Heart left ventricle (tissue), 16 donors: ENCODE measurements at regions of chr1 and their contacts with region 1.

Region 1: GRCh38 chr1:111507411-111508201 is 4.2 kb upstream of the ADORA3 start:
- DNase-seq: peak; percentile 71 to 89 (median 85)
- ATAC-seq: peak; percentile 72 to 78 (median 76)
- H3K4me3 ChIP-seq: peak overlapping the region in 10 of 12 donors; percentile 14 to 52 (median 39)
- H3K27ac ChIP-seq: peak overlapping the region; percentile 82 to 99 (median 92)
- H3K4me1 ChIP-seq: peaks cover 6 to 100% (median 37%) of the 10 kb centered on the region in 12 donors
- H3K27me3 ChIP-seq: no peaks in the 10 kb centered on the region
- CTCF ChIP-seq: peak in 1 of 12 donors; percentile 7
- POLR2A ChIP-seq: no peak

Region 2: DNA sequence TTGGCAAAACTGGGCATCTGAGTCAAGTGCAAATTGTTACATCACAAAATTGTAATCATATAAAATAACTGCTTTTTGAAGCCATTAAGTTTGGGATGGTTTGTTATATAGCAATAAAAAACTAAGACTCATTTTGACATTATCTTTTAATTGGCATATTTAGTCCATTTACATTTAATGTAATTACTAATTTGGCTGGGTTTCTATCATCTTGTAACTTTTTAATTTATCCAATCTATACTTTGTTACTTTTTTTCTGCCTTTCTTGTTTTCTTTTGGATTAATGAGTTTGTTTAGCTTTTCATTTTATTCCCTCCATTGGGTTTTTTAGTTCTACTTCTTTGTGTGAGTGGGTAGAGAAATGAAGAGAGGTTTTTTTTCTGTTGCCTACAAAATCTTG is 444.0 kb before region 1 on chr1:
- intact Hi-C with region 1: no loop called
- DNase-seq: no peak
- ATAC-seq: no peak
- H3K4me3 ChIP-seq: no peak overlapping the region
- H3K27ac ChIP-seq: no peak overlapping the region
- H3K4me1 ChIP-seq: no peaks in the 10 kb centered on the region
- H3K27me3 ChIP-seq: no peaks in the 10 kb centered on the region
- CTCF ChIP-seq: no peak
- POLR2A ChIP-seq: no peak

Region 3: GRCh38 chr1:111592389-111593361 is 85.1 kb after region 1 on chr1:
- intact Hi-C with region 1: loop called in 4 of 10 experiments (anchors 2 to 10 kb)
- DNase-seq: peak; percentile 89 to 94 (median 90)
- ATAC-seq: peak; percentile 93 to 96 (median 94)
- H3K4me3 ChIP-seq: peak overlapping the region in 9 of 12 donors; percentile 3 to 26 (median 9)
- H3K27ac ChIP-seq: peak overlapping the region; percentile 80 to 92 (median 82)
- H3K4me1 ChIP-seq: peaks cover 11 to 56% (median 30%) of the 10 kb centered on the region in 12 donors
- H3K27me3 ChIP-seq: no peaks in the 10 kb centered on the region
- CTCF ChIP-seq: no peak
- POLR2A ChIP-seq: no peak

Region 4: GRCh38 chr1:111656086-111657017 is 148.7 kb after region 1 on chr1:
- intact Hi-C with region 1: loop called (anchors 1 to 5 kb)
- DNase-seq: no peak
- ATAC-seq: peak; percentile 19 to 73 (median 56)
- H3K4me3 ChIP-seq: no peak overlapping the region
- H3K27ac ChIP-seq: peak overlapping the region in 2 of 12 donors; percentile 3 to 40
- H3K4me1 ChIP-seq: peaks cover 0 to 67% (median 25%) of the 10 kb centered on the region in 12 donors
- H3K27me3 ChIP-seq: no peaks in the 10 kb centered on the region
- CTCF ChIP-seq: peak; percentile 42 to 82 (median 68)
- POLR2A ChIP-seq: no peak

Region 5: DNA sequence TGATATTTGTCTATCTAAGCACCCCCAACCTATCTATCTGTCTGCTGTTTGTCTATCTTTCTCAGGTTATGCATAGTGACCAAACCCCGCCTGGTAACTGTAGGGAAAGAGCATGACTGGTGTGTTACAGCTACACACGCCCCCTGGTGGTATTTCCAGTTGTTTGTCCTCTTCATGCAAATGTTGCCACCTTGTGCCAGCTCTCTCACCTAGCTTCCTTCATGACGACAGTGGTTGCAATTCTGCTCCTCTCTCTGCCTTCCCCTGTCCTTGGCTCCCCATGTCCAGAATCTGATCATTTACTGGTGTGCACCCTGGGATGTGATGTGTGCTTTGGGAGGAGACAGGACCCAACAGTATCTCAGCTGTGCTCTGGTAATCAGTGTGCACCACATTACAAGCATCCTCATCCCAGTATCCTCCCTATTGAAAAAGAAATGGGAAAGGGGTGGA is 239.7 kb after region 1 on chr1:
- intact Hi-C with region 1: loop called in 1 of 10 experiments (anchors 5 kb)
- DNase-seq: peak in 4 of 5 donors; percentile 62 to 73 (median 64)
- ATAC-seq: peak in 3 of 4 donors; percentile 48 to 60 (median 51)
- H3K4me3 ChIP-seq: no peak overlapping the region
- H3K27ac ChIP-seq: no peak overlapping the region
- H3K4me1 ChIP-seq: peaks cover 0 to 37% (median 15%) of the 10 kb centered on the region in 12 donors
- H3K27me3 ChIP-seq: no peaks in the 10 kb centered on the region
- CTCF ChIP-seq: peak; percentile 49 to 73 (median 62)
- POLR2A ChIP-seq: no peak

Region 6: DNA sequence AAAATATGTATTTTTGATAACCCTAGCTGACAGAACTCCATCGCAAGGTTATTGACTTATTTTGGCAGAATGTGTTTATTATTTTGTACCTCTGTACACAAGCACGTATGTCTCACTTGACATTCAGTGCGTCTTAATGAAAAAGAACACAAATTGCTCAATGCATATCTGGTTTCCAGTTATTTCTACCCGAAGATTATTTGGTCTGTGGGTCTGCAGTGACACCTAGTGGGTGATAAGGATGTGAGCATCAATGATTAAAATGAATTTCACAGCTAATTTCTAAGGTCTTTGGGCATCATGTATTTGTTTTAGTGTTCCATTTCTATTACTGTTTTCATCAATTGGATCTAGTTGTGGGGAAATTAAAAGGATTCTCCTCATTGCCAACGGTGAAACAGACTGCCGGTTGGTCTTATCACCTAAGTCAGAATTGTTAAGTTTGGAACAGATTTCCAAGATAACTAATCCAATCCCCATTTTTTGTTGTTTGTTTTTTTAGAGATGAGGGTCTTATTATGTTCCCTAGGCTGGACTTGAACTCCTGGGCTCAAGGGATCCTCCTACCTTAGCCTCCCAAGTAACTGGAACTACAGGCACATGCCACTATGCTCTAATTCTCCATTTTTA is 262.0 kb after region 1 on chr1:
- intact Hi-C with region 1: loop called in 1 of 10 experiments (anchors 1 kb)
- DNase-seq: peak in 1 of 5 donors; percentile 31
- ATAC-seq: peak in 3 of 4 donors; percentile 41 to 48 (median 42)
- H3K4me3 ChIP-seq: no peak overlapping the region
- H3K27ac ChIP-seq: no peak overlapping the region
- H3K4me1 ChIP-seq: peaks cover 0 to 3% (median 0%) of the 10 kb centered on the region in 12 donors
- H3K27me3 ChIP-seq: no peaks in the 10 kb centered on the region
- CTCF ChIP-seq: peak; percentile 71 to 89 (median 79)
- POLR2A ChIP-seq: no peak